Endothelial cell of umbilical vein (primary cell): ENCODE measurements at regions of chr9 and their contacts with region 1.

Region 1: GRCh38 chr9:37938121-37938891 is 34.4 kb upstream of the SLC25A51 start:
- DNase-seq: peak; percentile 90
- H3K4me3 ChIP-seq: no peak overlapping the region
- H3K27ac ChIP-seq: peak overlapping the region; percentile 77
- H3K4me1 ChIP-seq: peaks cover 39% of the 10 kb centered on the region
- H3K27me3 ChIP-seq: no peaks in the 10 kb centered on the region
- CTCF ChIP-seq: no peak
- POLR2A ChIP-seq: no peak

Region 2: GRCh38 chr9:37820142-37820541 is 118.2 kb before region 1 on chr9:
- CTCF ChIA-PET with region 1: no interaction called
- POLR2A ChIA-PET with region 1: no interaction called
- dilution Hi-C with region 1: no loop called
- intact Hi-C with region 1: no loop called
- DNase-seq: no peak
- H3K4me3 ChIP-seq: no peak overlapping the region
- H3K27ac ChIP-seq: no peak overlapping the region
- H3K4me1 ChIP-seq: no peaks in the 10 kb centered on the region
- H3K27me3 ChIP-seq: no peaks in the 10 kb centered on the region
- CTCF ChIP-seq: no peak
- POLR2A ChIP-seq: no peak

Region 3: GRCh38 chr9:37963936-37964739 is 25.8 kb after region 1 on chr9:
- CTCF ChIA-PET with region 1: interaction called, 3 read pairs
- POLR2A ChIA-PET with region 1: no interaction called
- dilution Hi-C with region 1: no loop called
- intact Hi-C with region 1: loop called (anchors 1 kb)
- DNase-seq: peak; percentile 94
- H3K4me3 ChIP-seq: no peak overlapping the region
- H3K27ac ChIP-seq: peak overlapping the region; percentile 67
- H3K4me1 ChIP-seq: peaks cover 41% of the 10 kb centered on the region
- H3K27me3 ChIP-seq: no peaks in the 10 kb centered on the region
- CTCF ChIP-seq: no peak
- POLR2A ChIP-seq: no peak